B cell (primary cell): ENCODE measurements at regions of chr3 and their contacts with region 1.

Region 1: DNA sequence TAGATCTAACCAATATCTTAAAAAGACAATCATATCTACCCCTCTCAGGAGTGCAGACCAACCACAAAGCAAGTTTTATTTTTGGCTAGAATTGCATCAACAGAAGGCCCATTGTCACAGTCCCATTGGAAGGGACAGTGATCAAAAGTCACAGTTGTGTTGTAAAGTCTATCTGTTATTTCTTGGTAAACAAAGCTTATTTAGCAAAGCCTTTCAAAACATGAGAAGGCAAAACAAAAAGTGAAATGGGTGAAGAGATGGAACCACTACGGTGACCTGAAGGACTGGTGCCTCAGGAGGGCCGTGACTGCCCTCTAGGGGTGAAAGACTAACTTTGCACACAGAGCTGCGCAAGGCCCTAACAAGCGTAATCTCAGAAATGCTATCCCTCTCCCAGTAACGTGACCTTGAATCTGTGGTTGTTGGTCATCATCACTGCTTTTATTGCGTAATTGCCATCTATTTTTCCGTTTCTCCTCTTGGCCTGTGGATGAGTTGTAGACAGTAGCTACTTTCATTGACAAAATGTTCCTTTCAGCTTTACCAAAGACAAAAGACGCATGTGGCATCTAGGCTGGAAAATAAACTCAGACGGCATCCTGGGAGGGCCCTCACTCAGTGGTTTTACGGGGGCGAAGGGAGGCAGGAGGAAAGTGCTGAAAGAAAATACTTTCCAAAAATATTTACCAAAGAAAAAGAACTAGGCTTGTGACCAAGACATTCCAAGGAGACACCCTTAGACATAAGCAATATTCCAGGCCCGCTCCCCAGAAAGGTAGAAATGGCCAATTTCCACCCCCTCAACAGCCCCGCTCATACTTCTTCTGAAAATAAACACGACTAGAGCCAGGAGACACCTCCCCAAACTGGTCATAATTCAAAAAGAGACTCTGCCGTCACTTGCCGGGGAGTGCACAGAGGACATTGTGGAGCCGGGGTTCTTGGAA is 79.4 kb downstream of the FRMD4B start:
- DNase-seq: peak; percentile 68
- ATAC-seq: peak; percentile 58
- H3K4me3 ChIP-seq: no peak overlapping the region
- H3K4me3 Mint-ChIP-seq: no peak overlapping the region
- H3K27ac ChIP-seq: no peak overlapping the region
- H3K27ac Mint-ChIP-seq: no peak overlapping the region
- H3K4me1 ChIP-seq: no peaks in the 10 kb centered on the region
- H3K4me1 Mint-ChIP-seq: peaks cover 3% of the 10 kb centered on the region
- H3K27me3 ChIP-seq: no peaks in the 10 kb centered on the region
- H3K27me3 Mint-ChIP-seq: no peaks in the 10 kb centered on the region
- CTCF ChIP-seq: peak; percentile 94

Region 2: DNA sequence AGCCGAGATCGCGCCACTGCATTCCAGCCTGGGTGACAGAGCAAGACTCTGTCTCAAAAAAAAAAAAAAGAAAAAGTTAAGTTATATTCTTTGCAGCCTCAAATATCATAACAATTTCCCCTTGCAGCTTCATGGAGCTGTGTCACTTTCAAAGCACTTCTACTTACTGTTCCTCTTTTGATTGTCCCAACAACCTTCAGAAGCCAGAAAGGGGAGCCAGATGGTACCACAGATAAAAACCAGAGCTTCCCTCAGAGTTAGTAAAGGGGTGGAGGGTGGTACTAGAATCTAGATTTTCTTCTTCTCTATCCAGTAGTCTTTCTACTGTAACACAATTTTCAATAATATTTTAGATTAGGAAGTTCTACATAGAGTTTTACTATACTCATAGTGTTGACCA is 563.0 kb before region 1 on chr3:
- CTCF ChIA-PET with region 1: no interaction called
- POLR2A ChIA-PET with region 1: no interaction called
- intact Hi-C with region 1: no loop called
- DNase-seq: no peak
- ATAC-seq: no peak
- H3K4me3 ChIP-seq: no peak overlapping the region
- H3K4me3 Mint-ChIP-seq: no peak overlapping the region
- H3K27ac ChIP-seq: no peak overlapping the region
- H3K27ac Mint-ChIP-seq: no peak overlapping the region
- H3K4me1 ChIP-seq: no peaks in the 10 kb centered on the region
- H3K4me1 Mint-ChIP-seq: no peaks in the 10 kb centered on the region
- H3K27me3 ChIP-seq: no peaks in the 10 kb centered on the region
- H3K27me3 Mint-ChIP-seq: peaks cover 4% of the 10 kb centered on the region
- CTCF ChIP-seq: no peak

Region 3: DNA sequence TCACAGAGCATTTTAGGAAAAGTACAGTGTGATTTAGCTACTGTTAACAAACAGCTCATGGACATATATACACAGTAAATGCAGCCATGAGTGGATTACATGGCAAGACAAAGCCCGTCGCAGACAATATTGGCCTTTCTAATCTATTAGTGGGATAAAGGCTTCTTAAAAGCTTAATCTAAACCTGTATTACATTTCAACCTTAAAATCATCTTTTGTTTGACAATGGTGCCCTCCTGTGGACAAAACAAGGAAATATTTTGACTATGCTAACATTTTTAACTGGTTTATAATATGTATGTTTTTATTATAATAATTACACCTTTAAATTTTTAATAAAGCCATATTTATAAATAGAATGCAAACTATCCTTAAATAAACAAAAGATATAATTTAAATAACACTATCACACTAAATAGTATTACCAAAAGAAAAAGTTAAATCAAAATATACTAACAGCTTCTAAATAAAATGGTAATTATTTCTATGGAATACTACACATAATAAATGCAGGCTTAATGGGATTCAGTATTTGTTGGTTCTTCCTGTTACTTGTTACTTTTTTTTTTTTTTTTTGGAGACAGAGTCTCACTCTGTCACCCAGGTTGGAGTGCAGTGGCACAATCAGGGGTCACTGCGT is 412.8 kb before region 1 on chr3:
- CTCF ChIA-PET with region 1: interaction called, 4 read pairs
- POLR2A ChIA-PET with region 1: no interaction called
- intact Hi-C with region 1: loop called (anchors 10 kb)
- DNase-seq: peak; percentile 45
- ATAC-seq: no peak
- H3K4me3 ChIP-seq: no peak overlapping the region
- H3K4me3 Mint-ChIP-seq: no peak overlapping the region
- H3K27ac ChIP-seq: no peak overlapping the region
- H3K27ac Mint-ChIP-seq: no peak overlapping the region
- H3K4me1 ChIP-seq: no peaks in the 10 kb centered on the region
- H3K4me1 Mint-ChIP-seq: no peaks in the 10 kb centered on the region
- H3K27me3 ChIP-seq: no peaks in the 10 kb centered on the region
- H3K27me3 Mint-ChIP-seq: peaks cover 16% of the 10 kb centered on the region
- CTCF ChIP-seq: peak; percentile 77

Region 4: GRCh38 chr3:69013253-69014021 is 293.1 kb before region 1 on chr3 and contains the start of gene EOGT:
- CTCF ChIA-PET with region 1: interaction called, 3 read pairs
- POLR2A ChIA-PET with region 1: no interaction called
- intact Hi-C with region 1: loop called (anchors 1 kb)
- DNase-seq: peak; percentile 81
- ATAC-seq: peak; percentile 88
- H3K4me3 ChIP-seq: peak within 1 kb of the TSS; percentile 39 to 79 (median 72)
- H3K4me3 Mint-ChIP-seq: peak within 1 kb of the TSS; percentile 92
- H3K27ac ChIP-seq: peak within 1 kb of the TSS in 1 of 2 donors; percentile 47
- H3K27ac Mint-ChIP-seq: peak within 1 kb of the TSS; percentile 67
- H3K4me1 ChIP-seq: peaks cover 6 to 11% of the 10 kb centered on the region in 2 donors
- H3K4me1 Mint-ChIP-seq: peaks cover 10% of the 10 kb centered on the region
- H3K27me3 ChIP-seq: no peaks in the 10 kb centered on the region
- H3K27me3 Mint-ChIP-seq: no peaks in the 10 kb centered on the region
- CTCF ChIP-seq: peak; percentile 49
- total RNA-seq, gene EOGT: 11.3 and 15.5 TPM in 2 replicates

Region 5: DNA sequence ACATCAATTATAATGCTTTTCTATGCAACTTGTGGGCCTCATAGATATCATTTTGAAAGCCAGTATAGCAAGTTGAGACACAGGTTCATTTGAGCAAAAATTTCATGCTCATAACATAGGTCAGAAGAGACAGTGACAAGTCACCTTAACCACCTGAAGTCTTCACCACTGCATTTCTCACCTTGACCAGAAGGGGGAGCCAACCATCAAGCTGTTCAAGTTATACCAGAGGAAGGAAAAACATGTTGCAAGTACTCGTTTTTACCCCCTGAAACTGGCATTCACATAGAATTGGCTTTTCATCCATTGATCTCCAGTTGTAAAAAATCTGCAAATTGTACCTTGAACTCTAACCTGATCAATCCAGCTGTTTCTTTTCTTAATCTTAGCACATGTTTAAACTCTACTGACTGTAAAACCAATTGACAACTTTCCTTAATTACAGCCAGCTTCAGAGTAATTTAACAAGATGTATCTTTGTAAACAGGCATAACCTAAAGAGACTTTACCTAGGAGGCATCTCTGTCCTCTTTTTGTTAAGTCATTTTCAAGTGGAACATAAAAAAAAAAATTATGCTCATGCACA is 185.5 kb before region 1 on chr3:
- CTCF ChIA-PET with region 1: interaction called, 24 read pairs
- POLR2A ChIA-PET with region 1: no interaction called
- intact Hi-C with region 1: loop called (anchors 1 kb)
- DNase-seq: peak; percentile 83
- ATAC-seq: peak; percentile 80
- H3K4me3 ChIP-seq: no peak overlapping the region
- H3K4me3 Mint-ChIP-seq: no peak overlapping the region
- H3K27ac ChIP-seq: no peak overlapping the region
- H3K27ac Mint-ChIP-seq: no peak overlapping the region
- H3K4me1 ChIP-seq: no peaks in the 10 kb centered on the region
- H3K4me1 Mint-ChIP-seq: peaks cover 5% of the 10 kb centered on the region
- H3K27me3 ChIP-seq: no peaks in the 10 kb centered on the region
- H3K27me3 Mint-ChIP-seq: no peaks in the 10 kb centered on the region
- CTCF ChIP-seq: peak; percentile 99

Region 6: DNA sequence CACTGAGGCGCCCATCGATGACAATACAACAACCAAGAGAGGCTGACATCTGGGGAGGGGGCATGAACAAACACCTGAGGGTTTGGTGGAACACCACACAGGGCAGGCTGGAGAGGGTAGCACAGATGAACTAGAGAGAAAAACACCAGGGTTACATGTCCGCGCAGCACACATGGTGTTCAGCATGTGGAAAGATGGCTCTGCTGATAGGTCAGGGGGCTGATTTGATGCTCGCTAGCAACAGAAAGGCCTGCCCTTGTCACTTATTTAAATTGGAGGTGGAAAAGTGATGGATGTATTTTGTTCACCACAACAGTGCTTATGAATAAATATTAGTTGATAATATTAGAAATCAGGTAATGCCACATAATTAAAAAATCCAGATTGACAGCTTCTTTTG is 11.9 kb after region 1 on chr3:
- CTCF ChIA-PET with region 1: interaction called, 20 read pairs
- POLR2A ChIA-PET with region 1: no interaction called
- intact Hi-C with region 1: no loop called
- DNase-seq: no peak
- ATAC-seq: no peak
- H3K4me3 ChIP-seq: no peak overlapping the region
- H3K4me3 Mint-ChIP-seq: no peak overlapping the region
- H3K27ac ChIP-seq: no peak overlapping the region
- H3K27ac Mint-ChIP-seq: no peak overlapping the region
- H3K4me1 ChIP-seq: peaks cover 0 to 5% of the 10 kb centered on the region in 2 donors
- H3K4me1 Mint-ChIP-seq: peaks cover 5% of the 10 kb centered on the region
- H3K27me3 ChIP-seq: no peaks in the 10 kb centered on the region
- H3K27me3 Mint-ChIP-seq: no peaks in the 10 kb centered on the region
- CTCF ChIP-seq: no peak